MCF 10A (cell line): ENCODE measurements at regions of chr17 and their contacts with region 1.

Region 1: DNA sequence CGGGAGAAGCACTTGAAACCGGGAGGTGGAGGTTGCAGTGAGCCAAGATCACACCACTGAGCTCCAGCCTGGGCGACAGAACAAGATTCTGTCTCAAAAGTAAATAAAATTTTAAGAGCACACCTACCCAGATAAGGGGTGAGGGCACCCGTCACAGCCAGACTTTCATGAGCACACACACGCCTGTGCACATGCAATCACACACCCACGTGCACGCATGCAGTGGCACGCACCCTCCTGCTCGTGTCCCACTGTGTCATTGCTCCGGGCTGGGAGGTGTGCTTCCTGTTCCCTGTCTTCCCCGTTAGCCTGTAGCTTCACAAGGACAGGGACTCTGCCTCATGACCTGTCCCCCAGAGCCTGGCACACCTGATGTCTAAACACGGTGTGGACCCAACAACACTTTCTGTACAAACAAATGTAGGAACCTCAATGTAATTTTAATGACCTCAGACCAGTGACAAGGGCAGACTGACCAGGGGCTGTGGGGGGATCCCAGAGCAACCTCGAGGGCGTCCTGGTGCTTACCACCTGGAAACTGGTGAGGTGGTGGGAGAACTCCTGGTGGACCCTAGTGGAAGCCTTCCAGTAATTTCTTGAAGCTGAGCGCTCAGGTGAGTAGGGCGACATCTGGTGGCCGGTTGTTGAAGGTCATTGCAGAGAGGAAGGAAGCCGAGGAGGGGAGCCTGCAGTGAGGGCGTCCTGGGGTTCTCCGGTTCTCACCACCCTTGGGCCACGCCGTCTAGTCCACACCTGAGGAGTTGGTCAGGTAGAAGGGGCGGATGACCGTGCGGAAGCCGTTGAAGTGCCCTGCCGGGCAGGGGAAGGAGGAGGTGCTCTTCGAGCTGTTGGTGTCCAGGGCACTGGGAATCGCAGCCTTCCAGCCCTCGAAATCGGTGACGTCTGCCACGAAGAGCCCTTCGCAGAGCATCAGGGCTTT is 8.6 kb downstream of the LGALS3BP start:
- DNase-seq: peak; percentile 72
- H3K4me3 Mint-ChIP-seq: no peak overlapping the region
- H3K27ac Mint-ChIP-seq: no peak overlapping the region
- H3K4me1 Mint-ChIP-seq: peaks cover 8% of the 10 kb centered on the region
- H3K27me3 Mint-ChIP-seq: no peaks in the 10 kb centered on the region
- CTCF ChIP-seq: peak; percentile 83

Region 2: GRCh38 chr17:78497115-78497540 is 474.0 kb before region 1 on chr17:
- CTCF ChIA-PET with region 1: interaction called, 6 read pairs
- POLR2A ChIA-PET with region 1: no interaction called
- intact Hi-C with region 1: loop called (anchors 2 kb)
- DNase-seq: peak; percentile 84
- H3K4me3 Mint-ChIP-seq: no peak overlapping the region
- H3K27ac Mint-ChIP-seq: no peak overlapping the region
- H3K4me1 Mint-ChIP-seq: no peaks in the 10 kb centered on the region
- H3K27me3 Mint-ChIP-seq: no peaks in the 10 kb centered on the region
- CTCF ChIP-seq: peak; percentile 73

Region 3: GRCh38 chr17:78865682-78866390 is 105.3 kb before region 1 on chr17:
- CTCF ChIA-PET with region 1: interaction called, 126 read pairs
- POLR2A ChIA-PET with region 1: interaction called, 11 read pairs
- intact Hi-C with region 1: loop called (anchors 1 kb)
- DNase-seq: peak; percentile 83
- H3K4me3 Mint-ChIP-seq: no peak overlapping the region
- H3K27ac Mint-ChIP-seq: no peak overlapping the region
- H3K4me1 Mint-ChIP-seq: peaks cover 29% of the 10 kb centered on the region
- H3K27me3 Mint-ChIP-seq: no peaks in the 10 kb centered on the region
- CTCF ChIP-seq: peak; percentile 91

Region 4: DNA sequence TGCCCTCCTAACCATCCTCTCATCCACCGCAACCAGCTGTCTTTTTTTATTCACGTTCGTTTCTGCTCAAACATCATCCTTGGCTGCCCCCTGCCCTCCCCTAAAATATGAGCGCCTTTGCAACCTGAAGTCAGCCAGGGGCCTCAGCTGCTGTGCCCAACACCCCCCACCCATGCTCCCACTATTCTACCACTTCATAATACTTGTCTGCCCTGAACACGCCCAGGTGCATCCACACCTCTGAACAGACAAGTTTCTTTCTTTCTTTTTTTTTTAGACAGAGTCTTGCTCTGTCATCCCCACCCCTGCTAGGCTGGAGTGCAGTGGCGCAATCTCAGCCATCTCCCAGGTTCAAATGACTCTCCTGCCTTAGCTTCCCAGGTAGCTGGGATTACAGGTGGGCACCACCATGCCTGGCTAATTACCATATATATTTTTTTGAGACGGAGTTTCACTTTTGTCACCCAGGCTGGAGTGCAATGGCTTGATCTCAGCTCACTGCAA is 95.0 kb before region 1 on chr17:
- CTCF ChIA-PET with region 1: interaction called, 10 read pairs
- POLR2A ChIA-PET with region 1: no interaction called
- intact Hi-C with region 1: no loop called
- DNase-seq: no peak
- H3K4me3 Mint-ChIP-seq: no peak overlapping the region
- H3K27ac Mint-ChIP-seq: peak overlapping the region; percentile 50
- H3K4me1 Mint-ChIP-seq: peaks cover 27% of the 10 kb centered on the region
- H3K27me3 Mint-ChIP-seq: no peaks in the 10 kb centered on the region
- CTCF ChIP-seq: no peak

Region 5: DNA sequence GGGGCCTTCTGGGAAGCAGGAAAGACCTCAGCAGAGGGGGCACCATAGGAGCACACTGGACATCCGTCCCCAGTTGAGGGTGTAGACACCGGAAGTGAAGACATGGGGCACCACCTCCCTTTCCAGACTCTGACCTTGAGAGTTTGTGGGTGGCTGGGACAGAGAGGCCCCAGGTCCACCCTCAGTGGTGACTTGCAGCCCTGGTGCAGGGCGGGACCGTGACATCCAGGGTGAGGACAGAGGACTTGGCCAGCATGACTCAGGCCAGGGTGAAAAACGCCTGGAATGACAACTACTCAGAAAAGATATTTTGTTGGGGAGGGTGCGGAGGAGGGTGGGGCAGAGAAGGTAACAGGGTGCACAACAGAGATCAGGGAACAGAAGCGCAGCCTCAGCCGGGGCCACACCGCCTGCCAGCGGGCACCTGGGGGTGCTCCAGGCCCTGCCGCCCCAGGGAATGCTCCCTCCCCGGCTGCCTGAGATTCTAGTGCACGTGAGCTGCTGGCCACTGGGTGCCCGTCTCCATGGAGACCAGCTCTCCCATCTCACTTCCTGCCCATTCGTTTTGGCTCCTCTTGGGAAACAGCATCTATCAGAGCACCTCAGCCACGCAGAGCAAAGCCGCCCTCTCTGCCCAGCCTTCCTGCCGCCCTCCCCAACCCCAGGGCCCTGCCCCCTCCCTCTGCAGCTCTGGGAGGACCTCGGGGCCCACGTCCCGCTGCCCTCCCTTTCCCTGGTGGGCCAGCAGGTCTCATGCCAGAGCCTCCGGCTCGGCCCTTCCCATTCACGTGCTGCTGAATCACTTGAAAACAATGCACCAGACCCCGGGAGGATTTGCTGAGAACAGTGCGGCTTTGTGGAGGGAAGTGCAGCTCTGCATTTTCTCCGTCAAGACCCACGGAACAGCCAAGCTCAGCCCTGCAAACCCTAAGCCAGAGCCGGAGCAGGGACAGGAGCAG is 87.7 kb before region 1 on chr17:
- CTCF ChIA-PET with region 1: interaction called, 10 read pairs
- POLR2A ChIA-PET with region 1: interaction called, 3 read pairs
- intact Hi-C with region 1: loop called (anchors 1 kb)
- DNase-seq: peak; percentile 78
- H3K4me3 Mint-ChIP-seq: peak overlapping the region; percentile 58
- H3K27ac Mint-ChIP-seq: peak overlapping the region; percentile 91
- H3K4me1 Mint-ChIP-seq: peaks cover 21% of the 10 kb centered on the region
- H3K27me3 Mint-ChIP-seq: no peaks in the 10 kb centered on the region
- CTCF ChIP-seq: no peak

Region 6: GRCh38 chr17:79009397-79010308 is 38.5 kb after region 1 on chr17 and contains the start of gene CANT1:
- CTCF ChIA-PET with region 1: no interaction called
- POLR2A ChIA-PET with region 1: no interaction called
- intact Hi-C with region 1: no loop called
- DNase-seq: peak; percentile 76
- H3K4me3 Mint-ChIP-seq: peak within 1 kb of the TSS; percentile 90
- H3K27ac Mint-ChIP-seq: peak within 1 kb of the TSS; percentile 98
- H3K4me1 Mint-ChIP-seq: peaks cover 26% of the 10 kb centered on the region
- H3K27me3 Mint-ChIP-seq: no peaks in the 10 kb centered on the region
- CTCF ChIP-seq: no peak
- total RNA-seq, gene CANT1: 62.5 and 65.1 TPM in 2 replicates

Region 7: DNA sequence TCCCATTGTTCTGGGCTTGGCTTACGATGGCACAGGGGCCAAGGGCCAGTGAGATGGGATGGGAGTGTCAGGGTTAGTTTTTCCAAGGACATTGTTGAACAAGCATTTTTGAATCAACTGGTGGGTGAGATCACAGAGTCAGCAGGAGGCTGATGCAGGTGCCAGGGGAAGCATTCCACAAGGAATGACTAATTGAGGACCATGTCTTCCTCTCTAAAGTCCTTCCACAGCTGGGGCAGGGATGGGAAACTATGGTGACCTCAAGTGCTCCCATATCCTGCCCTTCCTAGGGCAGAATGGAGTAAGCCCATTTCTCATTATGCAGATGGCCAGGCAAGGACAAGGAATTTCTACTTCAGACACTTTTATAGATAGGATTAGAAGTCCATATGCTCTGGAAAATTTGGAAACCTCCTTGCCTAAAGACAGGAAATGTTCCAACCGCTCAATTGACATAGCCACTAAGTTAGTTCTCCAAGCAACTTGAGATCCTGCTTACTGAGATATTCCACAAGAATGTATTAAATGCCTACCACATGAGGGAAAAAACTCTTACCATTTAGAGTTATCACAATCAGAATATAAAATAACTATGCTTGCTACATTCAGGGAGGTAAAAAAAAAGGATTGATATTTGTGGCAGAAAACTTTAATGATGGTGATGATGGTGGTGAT is 82.3 kb after region 1 on chr17:
- CTCF ChIA-PET with region 1: no interaction called
- POLR2A ChIA-PET with region 1: no interaction called
- intact Hi-C with region 1: no loop called
- DNase-seq: no peak
- H3K4me3 Mint-ChIP-seq: no peak overlapping the region
- H3K27ac Mint-ChIP-seq: no peak overlapping the region
- H3K4me1 Mint-ChIP-seq: peaks cover 5% of the 10 kb centered on the region
- H3K27me3 Mint-ChIP-seq: peaks cover 12% of the 10 kb centered on the region
- CTCF ChIP-seq: no peak